ENCODE measurements at regions of chr2 and their contacts with region 1.

Region 1: DNA sequence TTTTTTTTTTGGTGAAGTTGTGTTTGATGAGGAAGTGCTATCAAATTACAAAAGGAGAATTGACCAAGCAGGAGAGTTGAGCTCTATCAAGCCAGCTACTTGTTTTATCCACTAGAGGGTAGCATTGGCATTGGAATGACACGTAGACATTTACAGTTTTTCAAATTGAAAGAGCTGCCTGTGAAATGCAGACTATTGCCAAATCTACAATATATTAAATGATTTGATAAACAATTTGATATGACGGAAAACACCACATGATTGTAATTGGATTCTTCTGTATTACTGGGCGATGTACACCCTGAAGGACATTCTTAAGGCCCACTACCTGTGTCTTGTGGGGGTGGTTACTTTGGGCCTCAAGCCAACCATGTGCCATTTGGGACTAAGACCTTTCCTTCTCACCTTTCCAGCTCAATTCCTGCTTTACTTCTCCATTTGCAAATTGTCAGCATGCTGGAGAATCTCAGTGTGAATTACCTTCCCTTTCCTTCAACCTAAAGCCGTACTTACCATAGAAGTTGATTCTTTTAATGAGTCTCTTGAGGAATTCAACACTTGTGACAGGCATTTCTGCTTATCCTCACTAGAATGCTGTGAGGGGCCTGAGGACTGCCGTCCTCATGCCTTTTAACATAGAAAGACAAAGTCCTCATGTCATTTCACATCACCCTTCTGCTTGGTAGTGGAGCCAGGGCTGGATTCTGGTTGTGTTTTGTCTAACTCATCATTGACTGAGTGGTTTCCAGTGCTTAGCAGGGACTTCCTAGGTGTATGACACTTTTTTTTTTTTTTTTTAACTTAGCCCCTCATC is 134.8 kb upstream of the THUMPD2 start:
- DNase-seq: peak; percentile 71
- H3K4me3 ChIP-seq: no peak overlapping the region
- H3K27ac ChIP-seq: no peak overlapping the region
- H3K4me1 ChIP-seq: no peaks in the 10 kb centered on the region
- H3K27me3 ChIP-seq: no peaks in the 10 kb centered on the region
- CTCF ChIP-seq: peak; percentile 42 to 67
- POLR2A ChIP-seq: no peak

Region 2: DNA sequence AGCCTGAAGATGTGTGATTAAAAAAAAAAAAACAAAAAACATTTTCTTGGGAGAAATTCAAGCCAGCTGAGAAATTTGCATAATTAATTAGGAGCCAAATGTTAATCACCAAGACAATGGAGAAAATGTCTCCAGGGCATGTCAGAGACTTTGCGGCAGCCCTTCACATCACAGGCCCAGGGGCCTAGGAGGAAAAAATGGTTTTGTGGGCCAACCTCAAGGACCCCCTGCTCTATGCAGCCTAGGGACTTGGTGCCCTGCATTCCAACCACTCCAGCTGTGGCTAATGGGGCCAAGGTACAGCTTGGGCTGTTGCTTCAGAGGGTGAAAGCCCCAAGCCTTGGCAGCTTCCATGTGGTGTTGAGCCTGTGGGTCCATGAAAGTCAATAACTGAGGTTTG is 107.1 kb after region 1 on chr2:
- CTCF ChIA-PET with region 1: no interaction called
- POLR2A ChIA-PET with region 1: no interaction called
- dilution Hi-C with region 1: no loop called
- intact Hi-C with region 1: no loop called
- DNase-seq: no peak
- H3K4me3 ChIP-seq: no peak overlapping the region
- H3K27ac ChIP-seq: no peak overlapping the region
- H3K4me1 ChIP-seq: no peaks in the 10 kb centered on the region
- H3K27me3 ChIP-seq: no peaks in the 10 kb centered on the region
- CTCF ChIP-seq: no peak
- POLR2A ChIP-seq: no peak

Region 3: GRCh38 chr2:40212804-40213470 is 299.1 kb after region 1 on chr2:
- CTCF ChIA-PET with region 1: interaction called, 18 read pairs
- POLR2A ChIA-PET with region 1: no interaction called
- dilution Hi-C with region 1: no loop called
- intact Hi-C with region 1: loop called (anchors 10 kb)
- DNase-seq: peak; percentile 22
- H3K4me3 ChIP-seq: no peak overlapping the region
- H3K27ac ChIP-seq: no peak overlapping the region
- H3K4me1 ChIP-seq: no peaks in the 10 kb centered on the region
- H3K27me3 ChIP-seq: peaks cover 0 to 1% of the 10 kb centered on the region in 2 experiments
- CTCF ChIP-seq: peak in 1 of 2 donors; percentile 32
- POLR2A ChIP-seq: no peak

Region 4: DNA sequence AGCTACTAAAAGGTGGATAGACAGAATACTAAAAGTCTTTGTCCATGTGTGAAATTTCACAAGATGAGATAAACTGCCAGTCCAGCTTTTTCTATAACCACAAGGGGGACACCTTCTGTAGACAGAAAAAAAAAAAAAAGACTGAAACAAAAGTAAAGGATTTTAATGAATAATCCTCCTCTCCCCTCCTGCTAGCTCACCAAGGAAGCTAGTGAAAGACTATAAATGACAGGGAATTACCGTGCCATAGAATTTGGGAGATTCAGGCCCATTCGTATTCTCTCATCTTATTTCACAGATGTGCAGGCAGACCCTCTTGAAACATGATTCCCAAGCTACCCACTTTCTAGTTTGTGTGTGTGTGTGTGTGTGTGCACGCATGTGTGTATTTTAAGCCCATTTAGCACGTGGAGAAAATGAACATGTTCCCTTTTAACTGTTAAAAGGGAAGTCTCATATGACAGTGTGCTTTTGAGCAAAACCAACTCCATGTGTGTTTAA is 574.3 kb after region 1 on chr2:
- CTCF ChIA-PET with region 1: interaction called, 21 read pairs
- POLR2A ChIA-PET with region 1: no interaction called
- dilution Hi-C with region 1: no loop called
- intact Hi-C with region 1: no loop called
- DNase-seq: peak; percentile 39
- H3K4me3 ChIP-seq: no peak overlapping the region
- H3K27ac ChIP-seq: no peak overlapping the region
- H3K4me1 ChIP-seq: no peaks in the 10 kb centered on the region
- H3K27me3 ChIP-seq: no peaks in the 10 kb centered on the region
- CTCF ChIP-seq: peak; percentile 15 to 45
- POLR2A ChIP-seq: no peak

Region 5: DNA sequence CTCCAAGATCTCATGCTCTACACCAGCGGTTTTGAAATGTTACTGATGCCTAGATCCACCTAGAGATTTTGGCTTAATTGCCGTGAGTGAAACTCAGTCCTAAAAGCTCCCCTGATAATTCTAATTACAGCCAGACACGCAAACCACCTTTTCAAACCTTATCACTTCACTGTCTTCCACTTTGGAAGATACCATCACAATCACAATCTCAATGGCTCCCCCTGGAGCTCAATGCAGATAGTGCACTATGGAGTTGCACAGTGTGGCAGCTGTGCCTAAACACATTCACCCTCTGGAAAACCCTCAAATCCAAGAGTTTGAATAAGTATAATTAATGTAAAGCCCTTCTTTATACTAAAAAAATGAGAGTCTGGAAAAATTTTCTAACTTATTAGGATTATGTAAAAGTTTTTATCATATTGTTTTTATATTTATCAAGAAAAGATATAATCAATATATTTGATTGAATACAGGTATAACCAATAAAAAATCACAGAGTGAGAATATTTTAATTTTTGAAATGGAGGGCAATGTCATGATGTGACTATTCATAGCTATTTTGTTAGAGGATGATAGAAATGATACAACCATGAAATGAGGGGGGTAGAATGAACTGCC is 640.9 kb after region 1 on chr2:
- CTCF ChIA-PET with region 1: interaction called, 135 read pairs
- POLR2A ChIA-PET with region 1: interaction called, 3 read pairs
- dilution Hi-C with region 1: no loop called
- intact Hi-C with region 1: loop called (anchors 1 kb)
- DNase-seq: peak; percentile 69
- H3K4me3 ChIP-seq: no peak overlapping the region
- H3K27ac ChIP-seq: no peak overlapping the region
- H3K4me1 ChIP-seq: no peaks in the 10 kb centered on the region
- H3K27me3 ChIP-seq: no peaks in the 10 kb centered on the region
- CTCF ChIP-seq: peak; percentile 70 to 80
- POLR2A ChIP-seq: no peak

Region 6: DNA sequence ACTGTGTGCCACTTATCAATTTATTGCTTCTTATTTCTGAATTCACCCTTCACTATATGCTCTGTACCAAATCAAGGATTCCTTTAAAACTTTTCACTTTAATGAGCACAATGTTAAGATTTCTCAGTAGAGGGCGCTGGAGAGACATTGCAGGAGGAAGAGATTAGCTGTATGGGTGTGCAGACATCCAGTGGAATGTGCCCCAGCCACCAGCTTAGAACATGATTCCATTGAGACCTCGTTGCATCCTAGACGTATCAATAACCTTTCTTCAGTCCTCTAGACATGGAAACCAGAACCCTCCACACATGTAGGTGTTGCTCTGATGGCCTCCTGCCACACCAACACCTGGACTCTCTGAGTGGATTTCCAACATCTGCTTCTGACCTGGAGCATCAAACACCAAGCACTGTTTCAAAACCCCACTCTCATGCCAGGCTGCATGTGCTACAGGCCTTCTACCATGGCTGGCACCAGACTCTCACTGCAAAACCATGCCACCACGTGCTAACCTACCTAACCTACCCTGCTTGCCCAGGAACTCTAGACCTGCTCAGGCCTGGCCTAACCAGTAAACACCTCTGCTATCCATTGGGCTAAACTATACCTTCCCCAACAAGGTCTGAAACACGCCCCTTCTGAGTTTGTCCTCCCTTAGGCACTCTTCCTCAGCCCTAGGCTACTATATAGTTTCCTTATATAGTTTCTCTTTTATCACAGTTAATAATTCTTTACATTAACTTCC is 1500.8 kb after region 1 on chr2:
- CTCF ChIA-PET with region 1: interaction called, 14 read pairs
- POLR2A ChIA-PET with region 1: no interaction called
- dilution Hi-C with region 1: no loop called
- intact Hi-C with region 1: no loop called
- DNase-seq: peak; percentile 39
- H3K4me3 ChIP-seq: no peak overlapping the region
- H3K27ac ChIP-seq: no peak overlapping the region
- H3K4me1 ChIP-seq: no peaks in the 10 kb centered on the region
- H3K27me3 ChIP-seq: no peaks in the 10 kb centered on the region
- CTCF ChIP-seq: peak; percentile 37 to 44
- POLR2A ChIP-seq: no peak

Measured in endothelial cell of umbilical vein (primary cell).